Activated naive CD4-positive, alpha-beta T cell treated with anti-CD3 and anti-CD28 coated beads, Interleukin-2, amount 10 ng/mL, durations not matched to agents 7 days and 5 days (primary cell): ENCODE measurements at regions of chr6 and their contacts with region 1.

Region 1: GRCh38 chr6:25942561-25943147 is 12.2 kb upstream of the SLC17A2 start:
- DNase-seq: no peak
- H3K4me3 Mint-ChIP-seq: no peak overlapping the region
- H3K27ac Mint-ChIP-seq: no peak overlapping the region
- H3K4me1 Mint-ChIP-seq: peaks cover 25% of the 10 kb centered on the region
- H3K27me3 Mint-ChIP-seq: no peaks in the 10 kb centered on the region

Region 2: DNA sequence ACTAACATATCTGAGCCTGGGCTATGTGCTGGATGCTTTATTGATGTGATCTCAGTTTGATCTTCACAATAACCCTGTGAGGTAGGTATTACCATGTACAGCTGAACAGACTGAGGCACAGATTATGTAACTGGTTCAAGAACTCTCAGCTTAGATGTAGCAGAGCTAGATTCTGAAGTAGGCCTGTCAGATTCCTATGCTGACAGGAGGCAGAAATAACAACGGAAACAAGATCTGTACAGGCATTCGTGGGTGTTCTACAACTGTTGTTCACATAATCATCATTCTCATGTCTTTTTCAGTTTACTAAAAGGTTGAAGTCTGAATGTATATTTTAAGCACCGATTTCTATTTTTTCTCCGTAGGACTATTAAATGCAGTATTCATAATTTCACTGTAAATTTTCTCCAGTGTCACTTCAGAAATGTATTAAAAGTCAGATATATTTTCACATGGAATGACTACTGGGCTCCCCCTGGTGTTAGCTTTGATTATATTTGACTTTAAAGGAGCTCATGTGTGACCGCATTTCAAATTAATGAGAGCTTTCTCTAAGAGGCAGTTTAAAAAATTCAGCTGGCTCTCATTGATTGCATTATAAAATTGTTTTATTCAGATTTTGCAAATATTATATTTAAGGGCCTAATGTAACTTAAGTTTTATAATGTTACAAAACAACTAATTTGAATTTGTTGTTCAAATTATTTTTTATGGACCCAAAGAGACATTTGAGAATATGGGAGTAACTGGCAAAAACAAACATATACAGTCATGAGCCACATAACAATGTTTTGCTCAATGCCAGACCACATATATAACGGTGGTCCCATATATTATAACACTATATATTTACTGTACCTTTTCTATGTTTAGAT is 224.6 kb before region 1 on chr6:
- CTCF ChIA-PET with region 1: interaction called, 22 read pairs
- DNase-seq: no peak
- H3K4me3 Mint-ChIP-seq: no peak overlapping the region
- H3K27ac Mint-ChIP-seq: no peak overlapping the region
- H3K4me1 Mint-ChIP-seq: no peaks in the 10 kb centered on the region
- H3K27me3 Mint-ChIP-seq: peaks cover 14% of the 10 kb centered on the region

Region 3: DNA sequence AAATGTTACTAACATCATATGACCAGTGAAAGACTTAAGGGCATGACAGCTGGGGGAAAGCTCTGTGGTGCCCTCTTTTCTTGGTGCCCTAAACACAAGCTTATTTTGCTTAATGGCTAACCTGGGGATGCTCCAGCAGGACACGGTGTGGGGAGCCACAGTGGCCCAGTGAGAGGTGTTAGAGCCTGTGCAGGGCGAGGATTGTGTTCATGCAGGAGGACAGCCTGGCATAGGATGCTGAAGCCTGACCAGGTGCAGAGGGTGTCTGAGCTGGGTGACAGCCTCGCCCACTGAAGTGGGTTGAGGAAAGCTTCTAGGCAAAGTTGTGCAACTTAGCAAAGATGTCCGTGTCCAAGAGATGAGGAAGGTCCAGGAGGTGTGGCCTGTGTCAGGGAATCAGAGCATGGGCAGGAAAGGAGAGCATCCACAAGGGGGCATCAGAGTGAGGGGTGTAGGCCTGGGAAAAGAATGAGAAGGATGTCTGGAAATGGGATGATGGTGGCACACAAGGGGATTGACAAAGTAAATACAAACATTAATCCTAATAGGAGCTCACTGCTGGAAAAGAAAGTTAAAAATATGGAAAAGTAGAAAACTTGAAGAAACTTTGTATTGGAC is 154.2 kb before region 1 on chr6:
- CTCF ChIA-PET with region 1: interaction called, 10 read pairs
- DNase-seq: peak; percentile 63
- H3K4me3 Mint-ChIP-seq: no peak overlapping the region
- H3K27ac Mint-ChIP-seq: no peak overlapping the region
- H3K4me1 Mint-ChIP-seq: no peaks in the 10 kb centered on the region
- H3K27me3 Mint-ChIP-seq: peaks cover 5% of the 10 kb centered on the region